PC-3 (cell line): ENCODE measurements at regions of chr2 and their contacts with region 1.

Region 1: DNA sequence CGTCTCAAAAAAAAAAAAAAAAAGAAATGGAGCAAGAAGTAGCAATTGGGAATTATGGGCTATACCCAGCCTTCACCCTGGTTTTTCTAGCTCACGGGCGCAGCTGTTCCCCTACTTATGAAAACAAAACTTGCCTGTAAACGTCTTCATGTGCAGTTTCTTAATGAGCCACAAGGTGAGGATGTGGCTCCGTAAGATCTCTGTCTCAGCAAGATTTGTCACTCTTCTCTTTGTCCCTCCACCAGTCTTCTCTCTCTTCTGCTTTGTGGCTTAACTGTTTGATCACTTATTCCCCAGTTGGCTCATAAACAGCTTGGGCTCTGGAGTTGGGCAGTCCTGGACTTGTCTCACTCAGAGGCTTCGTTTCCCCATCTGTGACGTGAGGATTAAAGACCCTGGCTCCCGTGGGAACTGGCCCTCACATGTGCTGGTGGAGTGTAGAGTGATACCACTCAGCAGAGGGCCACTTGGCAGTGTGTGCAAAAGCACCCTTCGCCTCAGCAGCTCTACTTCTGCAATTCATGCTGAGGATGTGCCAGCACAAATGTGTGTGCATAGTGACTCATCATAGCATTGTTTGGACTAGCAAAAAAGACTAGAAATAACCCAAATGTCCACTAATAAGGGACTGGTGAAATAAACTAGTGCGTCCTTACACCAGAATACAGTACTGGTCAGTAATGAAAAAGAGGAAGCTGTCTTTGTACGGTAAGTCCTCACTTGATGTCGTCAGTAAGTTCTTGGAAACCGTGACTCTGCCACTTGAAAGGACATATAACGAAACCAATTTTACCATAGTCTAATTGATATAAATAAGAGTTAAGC is 8.7 kb downstream of the CEP68 start:
- DNase-seq: peak; percentile 84
- ATAC-seq: peak; percentile 91
- H3K4me3 ChIP-seq: peak overlapping the region; percentile 28
- H3K27ac ChIP-seq: peak overlapping the region; percentile 78
- H3K4me1 ChIP-seq: peaks cover 30% of the 10 kb centered on the region
- H3K27me3 ChIP-seq: no peaks in the 10 kb centered on the region
- CTCF ChIP-seq: peak; percentile 86

Region 2: GRCh38 chr2:64807417-64807816 is 257.5 kb before region 1 on chr2:
- CTCF ChIA-PET with region 1: no interaction called
- POLR2A ChIA-PET with region 1: no interaction called
- intact Hi-C with region 1: no loop called
- DNase-seq: peak; percentile 96
- ATAC-seq: peak; percentile 94
- H3K4me3 ChIP-seq: no peak overlapping the region
- H3K27ac ChIP-seq: peak overlapping the region; percentile 46
- H3K4me1 ChIP-seq: peaks cover 11% of the 10 kb centered on the region
- H3K27me3 ChIP-seq: no peaks in the 10 kb centered on the region
- CTCF ChIP-seq: peak; percentile 32; the same call in 1 of the 2 replicates

Region 3: GRCh38 chr2:65129826-65130663 is 65.1 kb after region 1 on chr2 and contains the start of gene RAB1A:
- CTCF ChIA-PET with region 1: interaction called, 8 read pairs
- POLR2A ChIA-PET with region 1: interaction called, 6 read pairs
- intact Hi-C with region 1: loop called (anchors 2 kb)
- DNase-seq: peak; percentile 99
- ATAC-seq: peak; percentile 97
- H3K4me3 ChIP-seq: peak within 1 kb of the TSS; percentile 100
- H3K27ac ChIP-seq: peak within 1 kb of the TSS; percentile 78
- H3K4me1 ChIP-seq: peaks cover 19% of the 10 kb centered on the region
- H3K27me3 ChIP-seq: no peaks in the 10 kb centered on the region
- CTCF ChIP-seq: peak; percentile 15; the same call in 1 of the 2 replicates
- total RNA-seq, gene RAB1A: 96.9 and 97.3 TPM in 2 replicates

Region 4: DNA sequence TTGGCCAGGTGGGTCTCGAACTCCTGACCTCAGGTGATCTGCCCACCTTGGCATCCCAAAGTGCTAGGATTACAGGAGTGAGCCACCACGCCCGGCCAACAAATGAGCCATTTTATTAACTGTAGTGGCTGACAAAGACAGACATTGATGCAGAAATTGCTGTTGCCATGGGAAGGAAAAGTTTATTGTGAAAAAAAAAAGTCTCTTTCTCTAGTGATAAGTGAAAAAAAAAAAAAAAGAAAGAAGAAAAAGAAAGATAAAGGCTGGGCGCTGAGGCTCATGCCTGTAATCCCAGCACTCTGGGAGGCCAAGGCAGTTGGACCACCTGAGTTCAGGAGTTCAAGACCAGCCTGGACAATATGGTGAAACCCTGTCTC is 104.8 kb after region 1 on chr2:
- CTCF ChIA-PET with region 1: interaction called, 23 read pairs
- POLR2A ChIA-PET with region 1: interaction called, 3 read pairs
- intact Hi-C with region 1: loop called (anchors 1 kb)
- DNase-seq: no peak
- ATAC-seq: no peak; the same call in 1 of the 2 replicates
- H3K4me3 ChIP-seq: no peak overlapping the region
- H3K27ac ChIP-seq: no peak overlapping the region
- H3K4me1 ChIP-seq: peaks cover 9% of the 10 kb centered on the region; the same call in 1 of the 2 replicates
- H3K27me3 ChIP-seq: no peaks in the 10 kb centered on the region
- CTCF ChIP-seq: no peak

Region 5: DNA sequence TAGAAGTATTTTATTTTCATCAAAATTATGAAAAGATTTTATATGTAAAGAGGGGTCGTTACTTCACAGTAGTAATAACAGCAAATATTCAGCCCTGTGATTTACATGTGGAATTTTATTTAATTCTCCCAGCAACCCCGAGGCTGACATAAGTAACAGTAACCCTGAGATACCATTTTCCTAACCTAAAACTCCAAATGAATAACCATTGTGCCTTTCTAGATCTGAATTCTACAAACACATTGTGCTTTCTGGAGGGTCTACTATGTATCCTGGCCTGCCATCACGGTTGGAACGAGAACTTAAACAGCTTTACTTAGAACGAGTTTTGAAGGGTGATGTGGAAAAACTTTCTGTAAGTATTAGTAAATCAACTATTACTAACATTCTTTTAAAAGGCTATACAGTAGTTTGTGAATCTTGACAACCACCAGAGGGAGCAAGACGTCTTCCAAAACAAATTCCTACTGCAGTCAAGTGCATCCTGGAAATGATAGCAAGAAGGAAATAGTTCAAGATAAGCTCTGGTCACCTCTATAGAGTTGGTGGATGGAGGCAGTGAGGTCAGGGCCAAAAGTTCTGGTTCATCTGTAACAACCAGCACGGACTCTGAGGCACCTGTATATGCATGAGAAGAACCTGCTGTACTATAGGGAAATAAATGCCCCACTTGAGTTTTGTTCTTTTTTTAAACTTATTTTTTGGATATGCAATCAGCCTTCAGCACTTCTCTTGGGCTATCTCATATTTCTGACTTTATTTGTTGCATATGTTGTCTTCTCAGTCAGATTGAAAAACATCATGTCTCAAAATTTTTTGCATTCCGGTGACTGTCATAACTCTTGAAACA is 200.1 kb after region 1 on chr2:
- CTCF ChIA-PET with region 1: no interaction called
- POLR2A ChIA-PET with region 1: no interaction called
- intact Hi-C with region 1: loop called (anchors 10 kb)
- DNase-seq: peak; percentile 74
- ATAC-seq: peak; percentile 70
- H3K4me3 ChIP-seq: no peak overlapping the region
- H3K27ac ChIP-seq: no peak overlapping the region
- H3K4me1 ChIP-seq: peaks cover 19% of the 10 kb centered on the region; the same call in 1 of the 2 replicates
- H3K27me3 ChIP-seq: no peaks in the 10 kb centered on the region
- CTCF ChIP-seq: peak; percentile 88